Mammary epithelial cell (primary cell): ENCODE measurements at regions of chr22 and their contacts with region 1.

Region 1: DNA sequence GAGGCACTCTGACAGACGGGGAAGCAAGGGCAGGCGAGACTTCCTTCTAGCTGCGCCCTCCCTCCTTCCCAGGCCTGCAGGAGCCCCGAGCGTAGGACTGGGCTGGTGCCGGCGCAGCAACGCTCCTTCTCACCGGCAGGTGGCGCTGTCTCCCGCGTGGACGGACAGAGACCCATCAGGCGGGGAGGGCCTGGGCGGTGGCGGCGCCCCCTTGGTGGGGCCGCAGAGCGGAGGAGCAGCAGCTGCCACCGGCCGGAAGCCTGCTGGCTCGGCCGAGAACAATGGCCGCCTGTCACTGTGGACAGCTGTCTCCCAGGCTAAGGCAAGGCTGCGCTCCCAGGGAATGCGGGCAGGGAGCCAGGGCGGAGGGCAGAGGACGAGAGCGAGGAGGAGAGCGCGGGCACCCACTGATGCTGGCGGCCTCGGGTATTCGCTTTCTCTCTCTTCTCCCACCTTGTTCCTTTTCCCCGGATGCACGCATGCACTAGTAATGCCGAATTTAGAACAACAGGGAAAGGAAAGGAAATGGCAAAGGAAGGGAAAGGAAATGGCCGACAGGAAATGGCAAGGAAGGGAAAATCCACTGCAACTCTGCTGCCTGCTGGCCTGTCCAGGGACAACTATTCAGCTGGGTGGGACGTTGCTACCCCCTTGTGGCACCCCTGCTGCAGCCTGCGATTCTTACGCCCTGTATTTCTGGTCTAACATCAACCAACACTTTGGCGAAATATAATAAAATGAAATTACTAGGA is 14.4 kb downstream of the PPM1F start:
- DNase-seq: peak; percentile 64
- H3K4me3 ChIP-seq: peak overlapping the region; percentile 12 to 53 (median 44)
- H3K27ac ChIP-seq: peak overlapping the region; percentile 72
- H3K4me1 ChIP-seq: peaks cover 46% of the 10 kb centered on the region
- H3K27me3 ChIP-seq: no peaks in the 10 kb centered on the region
- CTCF ChIP-seq: peak; percentile 94 to 99

Region 2: GRCh38 chr22:21707677-21708076 is 230.6 kb before region 1 on chr22:
- CTCF ChIA-PET with region 1: no interaction called
- dilution Hi-C with region 1: loop called (anchors 5 kb)
- in situ Hi-C with region 1: loop called in 1 of 2 experiments (anchors 5 kb)
- intact Hi-C with region 1: no loop called
- DNase-seq: no peak
- H3K4me3 ChIP-seq: no peak overlapping the region
- H3K27ac ChIP-seq: no peak overlapping the region
- H3K4me1 ChIP-seq: no peaks in the 10 kb centered on the region
- H3K27me3 ChIP-seq: no peaks in the 10 kb centered on the region
- CTCF ChIP-seq: no peak

Region 3: DNA sequence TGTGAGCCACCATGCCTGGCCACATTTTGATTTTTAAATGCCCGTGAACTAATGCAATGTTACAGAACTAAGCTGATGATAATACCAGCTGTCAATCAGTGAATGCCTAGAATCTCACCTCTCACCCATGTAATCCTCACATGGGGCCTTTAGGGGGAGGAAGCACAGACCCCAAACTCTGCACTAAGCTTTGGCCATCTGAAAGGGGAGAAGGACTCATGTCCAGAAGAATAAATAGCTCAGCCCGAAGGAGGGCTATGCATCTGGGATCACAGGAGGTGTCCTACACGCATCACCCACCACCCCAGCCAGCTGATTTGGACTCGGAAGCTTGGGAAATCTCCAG is 166.6 kb before region 1 on chr22:
- CTCF ChIA-PET with region 1: no interaction called
- dilution Hi-C with region 1: no loop called
- in situ Hi-C with region 1: no loop called
- intact Hi-C with region 1: loop called (anchors 5 kb)
- DNase-seq: no peak
- H3K4me3 ChIP-seq: no peak overlapping the region
- H3K27ac ChIP-seq: no peak overlapping the region
- H3K4me1 ChIP-seq: no peaks in the 10 kb centered on the region
- H3K27me3 ChIP-seq: no peaks in the 10 kb centered on the region
- CTCF ChIP-seq: no peak

Region 4: GRCh38 chr22:21952586-21953571 is 14.6 kb after region 1 on chr22 and contains the start of gene PPM1F:
- CTCF ChIA-PET with region 1: interaction called, 4 read pairs
- dilution Hi-C with region 1: no loop called
- in situ Hi-C with region 1: no loop called
- intact Hi-C with region 1: loop called (anchors 2 kb)
- DNase-seq: peak; percentile 59
- H3K4me3 ChIP-seq: peak within 1 kb of the TSS; percentile 61 to 85 (median 84)
- H3K27ac ChIP-seq: no peak within 1 kb of the TSS
- H3K4me1 ChIP-seq: peaks cover 18% of the 10 kb centered on the region
- H3K27me3 ChIP-seq: no peaks in the 10 kb centered on the region
- CTCF ChIP-seq: peak; percentile 56 to 68
- total RNA-seq, gene PPM1F: 30.8 to 43.6 TPM

Region 5: GRCh38 chr22:22001664-22002525 is 63.6 kb after region 1 on chr22:
- CTCF ChIA-PET with region 1: no interaction called
- dilution Hi-C with region 1: loop called (anchors 5 kb)
- in situ Hi-C with region 1: no loop called
- intact Hi-C with region 1: no loop called
- DNase-seq: no peak
- H3K4me3 ChIP-seq: no peak overlapping the region
- H3K27ac ChIP-seq: no peak overlapping the region
- H3K4me1 ChIP-seq: no peaks in the 10 kb centered on the region
- H3K27me3 ChIP-seq: no peaks in the 10 kb centered on the region
- CTCF ChIP-seq: no peak

Region 6: DNA sequence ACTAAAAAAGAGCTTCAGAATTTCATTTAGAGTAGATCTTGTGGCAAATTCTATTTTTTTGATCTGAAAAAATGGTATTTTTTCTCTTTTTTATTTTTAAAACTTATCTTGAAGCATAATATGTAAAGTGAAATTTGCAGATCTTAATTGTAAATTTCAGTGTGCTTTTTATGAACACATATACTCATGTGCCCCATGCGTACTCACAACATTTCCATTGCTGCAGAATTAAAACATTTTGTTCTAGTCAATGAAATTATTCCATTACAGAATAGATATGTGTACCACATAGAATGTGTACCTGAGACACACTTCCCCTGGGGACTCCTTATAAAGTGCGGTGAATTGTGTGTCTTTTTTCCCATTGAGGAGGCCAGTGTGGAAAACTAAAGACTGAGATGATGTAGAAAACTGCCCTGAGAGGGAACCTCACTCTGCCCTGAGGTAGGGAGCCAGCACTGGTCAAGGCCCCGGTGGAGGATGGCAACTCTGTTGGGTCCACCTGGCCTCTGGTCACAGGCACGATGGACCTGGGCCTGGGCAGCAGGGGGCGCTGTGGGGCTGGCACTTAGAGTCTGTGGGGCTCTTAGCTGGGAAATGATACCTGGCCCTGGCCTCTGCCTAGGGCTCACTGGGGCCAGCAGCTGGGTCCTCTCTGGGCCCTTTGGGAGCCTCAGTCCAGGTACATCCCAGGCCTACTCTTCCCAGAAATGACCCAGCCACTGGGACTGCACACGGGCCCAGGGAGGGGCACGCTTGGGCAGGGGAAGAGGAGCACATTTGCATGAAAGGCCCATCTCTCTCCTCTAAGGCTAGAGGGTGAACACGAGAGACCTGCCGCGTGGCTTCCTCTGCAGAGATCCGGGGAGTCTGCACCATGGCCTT is 122.2 kb after region 1 on chr22:
- CTCF ChIA-PET with region 1: no interaction called
- dilution Hi-C with region 1: no loop called
- in situ Hi-C with region 1: no loop called
- intact Hi-C with region 1: no loop called
- DNase-seq: peak; percentile 39
- H3K4me3 ChIP-seq: no peak overlapping the region
- H3K27ac ChIP-seq: no peak overlapping the region
- H3K4me1 ChIP-seq: peaks cover 4% of the 10 kb centered on the region
- H3K27me3 ChIP-seq: no peaks in the 10 kb centered on the region
- CTCF ChIP-seq: peak; percentile 80 to 99